ENCODE measurements at regions of chr17 and their contacts with region 1.

Region 1: DNA sequence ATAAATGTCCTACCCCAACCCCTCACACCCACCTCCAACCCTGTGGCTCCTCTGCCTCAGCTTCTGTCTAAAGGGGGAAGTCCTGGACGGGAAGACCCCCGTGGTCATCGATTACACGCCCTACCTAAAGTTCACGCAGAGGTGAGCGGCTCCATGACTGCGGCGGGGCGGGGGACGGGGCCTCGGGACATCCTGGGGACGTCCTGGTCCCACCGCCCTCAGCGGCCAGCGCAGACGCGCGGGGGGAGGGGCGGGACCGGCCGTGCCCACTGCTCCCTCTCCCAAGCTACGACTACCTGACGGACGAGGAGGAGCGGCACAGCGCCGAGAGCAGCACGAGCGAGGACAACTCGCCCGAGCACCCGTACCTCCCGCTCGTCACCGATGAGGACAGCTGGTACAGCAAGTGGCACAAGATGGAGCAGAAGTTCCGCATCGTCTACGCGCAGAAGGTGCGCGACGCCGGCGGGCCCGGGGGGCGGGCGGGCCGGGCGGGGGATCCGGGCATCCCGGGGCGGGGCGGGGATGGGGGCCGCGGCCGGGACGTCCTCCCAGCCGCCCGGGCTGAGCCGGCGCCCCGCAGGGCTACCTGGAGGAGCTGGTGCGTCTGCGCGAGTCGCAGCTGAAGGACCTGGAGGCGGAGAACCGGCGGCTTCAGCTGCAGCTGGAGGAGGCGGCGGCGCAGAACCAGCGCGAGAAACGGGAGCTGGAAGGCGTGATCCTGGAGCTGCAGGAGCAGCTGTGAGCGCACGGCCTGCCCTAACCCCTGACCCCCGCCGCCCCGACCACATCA is 6.7 kb downstream of the RUNDC3A start:
- DNase-seq: no peak
- ATAC-seq: peak; percentile 78
- H3K4me3 ChIP-seq: peak overlapping the region; percentile 42 to 50
- H3K27ac ChIP-seq: 0 out of 2 replicates have a peak overlapping the region, but pooled peaks have one; percentile 23
- H3K4me1 ChIP-seq: no peaks in the 10 kb centered on the region
- H3K27me3 ChIP-seq: no peaks in the 10 kb centered on the region
- CTCF ChIP-seq: no peak

Region 2: DNA sequence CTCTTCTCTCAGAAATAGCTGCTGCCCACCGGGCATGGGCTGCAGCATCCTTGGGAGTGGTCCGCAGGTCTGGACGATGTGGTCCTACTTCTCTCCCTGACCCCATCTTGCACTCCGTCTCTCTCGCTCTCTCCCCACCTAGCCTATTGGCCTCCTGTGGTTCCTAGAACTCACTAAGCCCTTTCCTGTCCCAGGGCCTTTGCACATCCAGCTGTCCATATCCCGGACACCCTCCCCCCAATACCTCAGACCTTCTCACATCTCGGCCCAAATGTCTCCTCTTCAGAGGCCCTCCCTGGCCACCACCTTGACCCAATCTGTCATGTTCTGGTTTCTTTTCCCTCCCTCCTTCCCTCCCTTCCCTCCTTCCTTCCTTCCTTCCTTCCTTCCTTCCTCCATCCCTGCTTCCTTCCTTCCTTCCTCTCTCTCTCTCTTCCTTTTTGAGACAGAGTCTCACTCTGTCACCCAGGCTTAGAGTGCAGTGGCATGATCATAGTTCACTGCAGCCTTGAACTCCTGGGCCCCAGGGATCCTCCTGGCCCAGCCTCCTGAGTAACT is 51.6 kb before region 1 on chr17:
- CTCF ChIA-PET with region 1: no interaction called
- POLR2A ChIA-PET with region 1: interaction called, 10 read pairs
- in situ Hi-C with region 1: no loop called
- intact Hi-C with region 1: no loop called
- DNase-seq: no peak
- ATAC-seq: no peak
- H3K4me3 ChIP-seq: no peak overlapping the region
- H3K27ac ChIP-seq: no peak overlapping the region
- H3K4me1 ChIP-seq: no peaks in the 10 kb centered on the region
- H3K27me3 ChIP-seq: no peaks in the 10 kb centered on the region
- CTCF ChIP-seq: no peak

Region 3: DNA sequence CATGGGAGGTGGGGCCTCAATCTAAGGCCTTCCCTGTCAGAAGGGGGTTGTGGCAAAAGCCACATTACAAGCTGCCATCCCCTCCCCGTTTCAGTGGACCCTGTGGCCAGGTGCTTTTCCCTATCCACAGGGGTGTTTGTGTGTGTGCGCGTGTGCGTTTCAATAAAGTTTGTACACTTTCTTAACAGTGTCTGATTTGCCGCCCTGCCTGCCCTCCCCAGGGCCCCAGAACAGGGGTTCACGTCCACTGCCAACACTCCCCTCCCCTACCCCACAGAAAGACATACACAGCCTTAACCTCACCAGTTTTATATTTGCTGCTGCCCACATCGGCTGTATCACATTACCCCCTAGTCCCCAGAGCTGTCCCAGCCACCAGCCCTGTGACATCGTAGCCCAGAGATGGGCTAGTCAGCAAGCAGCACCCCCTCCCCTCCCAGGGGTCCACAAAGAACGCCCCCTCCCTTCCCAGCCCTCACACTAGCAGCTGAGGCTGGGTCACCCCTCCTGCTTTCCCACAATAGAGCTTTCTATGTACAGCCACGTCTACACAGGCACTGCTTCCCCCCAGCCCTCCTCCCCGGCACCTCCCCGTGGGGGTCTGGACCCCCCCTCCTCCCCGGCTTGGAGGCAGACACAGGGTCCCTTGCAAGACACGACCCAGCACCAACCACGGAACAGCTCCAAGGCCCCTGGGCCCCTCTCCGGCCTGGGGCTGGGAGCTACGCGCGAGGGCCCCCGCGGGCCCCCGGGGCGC is 38.0 kb after region 1 on chr17:
- CTCF ChIA-PET with region 1: no interaction called
- POLR2A ChIA-PET with region 1: interaction called, 18 read pairs
- in situ Hi-C with region 1: no loop called
- intact Hi-C with region 1: no loop called
- DNase-seq: no peak
- ATAC-seq: no peak
- H3K4me3 ChIP-seq: peak overlapping the region in 1 of 2 experiments; percentile 34; a peak in 3 of 4 replicates
- H3K27ac ChIP-seq: no peak overlapping the region
- H3K4me1 ChIP-seq: no peaks in the 10 kb centered on the region
- H3K27me3 ChIP-seq: no peaks in the 10 kb centered on the region
- CTCF ChIP-seq: no peak

Measured in Panc1 (cell line).